A673 (cell line): ENCODE measurements at regions of chr5 and their contacts with region 1.

Region 1: GRCh38 chr5:147782110-147783028 is at the start of gene JAKMIP2:
- DNase-seq: peak; percentile 99
- H3K4me3 ChIP-seq: peak within 1 kb of the TSS; percentile 74
- H3K27ac ChIP-seq: peak within 1 kb of the TSS; percentile 86
- H3K4me1 ChIP-seq: peaks cover 31% of the 10 kb centered on the region
- H3K27me3 ChIP-seq: no peaks in the 10 kb centered on the region
- CTCF ChIP-seq: 0 out of 2 replicates have a peak, but pooled peaks have one; percentile 29
- total RNA-seq, gene JAKMIP2: 67.4 and 85.5 TPM in 2 replicates

Region 2: DNA sequence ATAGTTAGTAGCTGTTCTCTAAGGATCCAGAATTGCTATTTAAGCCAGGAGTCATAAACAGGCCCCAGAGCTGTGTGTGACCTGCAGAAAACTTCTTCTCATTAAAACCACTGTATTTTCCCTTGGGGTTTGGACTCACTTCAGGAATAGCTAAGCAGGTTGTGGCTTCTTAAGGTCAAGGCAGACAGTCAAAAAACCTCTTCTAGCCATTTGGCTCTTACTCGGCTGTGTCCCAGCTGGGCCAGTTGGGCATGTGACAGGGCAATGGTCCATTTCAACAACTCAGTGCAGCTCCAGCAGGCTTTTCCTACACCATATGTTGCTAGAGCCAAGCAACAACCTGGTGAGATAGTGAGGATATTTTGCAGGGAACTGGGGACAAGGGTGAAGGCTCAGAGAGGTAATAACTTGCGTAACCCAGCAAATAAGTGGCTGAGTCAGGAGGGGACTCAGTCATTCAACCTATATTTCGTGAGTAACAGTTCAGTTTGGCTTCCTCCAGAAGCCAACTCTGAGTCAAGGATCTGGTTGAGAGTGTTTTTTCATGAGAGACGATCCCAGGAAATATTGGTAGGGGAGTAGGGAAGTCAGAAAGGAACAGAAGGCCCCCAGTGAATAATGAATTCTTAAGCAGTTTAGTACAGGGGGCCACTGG is 788.4 kb before region 1 on chr5:
- CTCF ChIA-PET with region 1: no interaction called
- POLR2A ChIA-PET with region 1: no interaction called
- intact Hi-C with region 1: no loop called
- DNase-seq: no peak
- H3K4me3 ChIP-seq: no peak overlapping the region
- H3K27ac ChIP-seq: no peak overlapping the region
- H3K4me1 ChIP-seq: no peaks in the 10 kb centered on the region
- H3K27me3 ChIP-seq: peaks cover 8% of the 10 kb centered on the region
- CTCF ChIP-seq: no peak

Region 3: DNA sequence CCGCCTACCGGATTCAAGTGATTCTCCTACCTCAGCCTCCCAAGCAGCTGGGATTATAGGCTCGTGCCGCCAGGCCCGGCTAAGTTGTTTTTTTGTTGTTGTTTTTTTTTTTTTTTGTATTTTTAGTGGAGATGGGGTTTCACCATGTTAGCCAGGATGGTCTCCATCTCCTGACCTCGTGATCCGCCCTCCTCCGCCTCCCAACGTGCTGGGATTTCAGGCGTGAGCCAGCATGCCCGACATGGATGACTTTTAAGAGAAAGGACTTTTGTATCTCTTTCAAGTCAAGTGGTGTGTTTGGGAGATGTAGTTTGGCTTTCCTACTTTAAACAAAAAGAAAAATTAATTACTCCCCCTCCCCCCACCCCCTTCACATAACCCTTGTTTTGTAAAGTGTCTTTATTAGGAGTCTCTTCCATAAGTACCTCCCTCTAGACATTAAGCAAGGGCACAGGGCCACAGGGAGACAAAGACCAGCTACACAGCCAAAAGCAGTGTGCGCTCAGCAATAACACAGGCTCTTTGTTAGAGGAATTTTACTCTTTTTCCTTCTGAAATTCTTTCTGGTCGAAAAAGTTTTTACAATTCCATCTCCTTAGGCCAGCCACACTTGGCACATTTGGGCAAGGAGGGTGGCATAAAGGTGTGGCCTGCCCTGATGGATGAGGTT is 31.1 kb before region 1 on chr5:
- CTCF ChIA-PET with region 1: no interaction called
- POLR2A ChIA-PET with region 1: interaction called, 3 read pairs
- intact Hi-C with region 1: loop called (anchors 2 kb)
- DNase-seq: no peak
- H3K4me3 ChIP-seq: no peak overlapping the region
- H3K27ac ChIP-seq: peak overlapping the region; percentile 91
- H3K4me1 ChIP-seq: peaks cover 91% of the 10 kb centered on the region
- H3K27me3 ChIP-seq: no peaks in the 10 kb centered on the region
- CTCF ChIP-seq: no peak

Region 4: GRCh38 chr5:147803926-147804325 is 21.6 kb after region 1 on chr5:
- CTCF ChIA-PET with region 1: no interaction called
- POLR2A ChIA-PET with region 1: interaction called, 4 read pairs
- intact Hi-C with region 1: loop called (anchors 2 kb)
- DNase-seq: no peak
- H3K4me3 ChIP-seq: no peak overlapping the region
- H3K27ac ChIP-seq: peak overlapping the region; percentile 59
- H3K4me1 ChIP-seq: peaks cover 28% of the 10 kb centered on the region
- H3K27me3 ChIP-seq: no peaks in the 10 kb centered on the region
- CTCF ChIP-seq: no peak

Region 5: GRCh38 chr5:147963948-147964693 is 181.8 kb after region 1 on chr5:
- CTCF ChIA-PET with region 1: no interaction called
- POLR2A ChIA-PET with region 1: no interaction called
- intact Hi-C with region 1: no loop called
- DNase-seq: no peak
- H3K4me3 ChIP-seq: no peak overlapping the region
- H3K27ac ChIP-seq: no peak overlapping the region
- H3K4me1 ChIP-seq: no peaks in the 10 kb centered on the region
- H3K27me3 ChIP-seq: peaks cover 13% of the 10 kb centered on the region
- CTCF ChIP-seq: no peak

Region 6: DNA sequence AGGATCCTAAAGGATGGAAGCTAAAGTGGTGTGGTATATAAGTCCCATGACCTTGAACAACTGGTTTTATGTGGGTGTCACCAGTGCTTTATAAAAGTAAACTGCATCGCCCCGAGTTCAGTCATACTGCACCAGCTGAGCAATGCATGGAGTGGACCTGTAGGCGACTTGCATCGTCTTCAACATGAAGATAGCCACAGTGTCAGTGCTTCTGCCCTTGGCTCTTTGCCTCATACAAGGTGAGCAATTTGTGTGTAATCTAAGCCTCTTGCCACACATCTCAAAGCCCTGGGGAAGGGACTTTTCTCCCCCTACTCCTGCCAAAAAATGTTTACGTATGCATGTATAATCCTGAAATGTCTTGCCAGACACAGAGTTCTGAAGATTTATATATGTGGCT is 281.5 kb after region 1 on chr5 and contains the start of gene SPINK5:
- CTCF ChIA-PET with region 1: no interaction called
- POLR2A ChIA-PET with region 1: no interaction called
- intact Hi-C with region 1: no loop called
- DNase-seq: no peak
- H3K4me3 ChIP-seq: no peak within 1 kb of the TSS
- H3K27ac ChIP-seq: no peak within 1 kb of the TSS
- H3K4me1 ChIP-seq: no peaks in the 10 kb centered on the region
- H3K27me3 ChIP-seq: peaks cover 45% of the 10 kb centered on the region
- CTCF ChIP-seq: no peak
- total RNA-seq, gene SPINK5: not detected in 2 replicates

Region 7: DNA sequence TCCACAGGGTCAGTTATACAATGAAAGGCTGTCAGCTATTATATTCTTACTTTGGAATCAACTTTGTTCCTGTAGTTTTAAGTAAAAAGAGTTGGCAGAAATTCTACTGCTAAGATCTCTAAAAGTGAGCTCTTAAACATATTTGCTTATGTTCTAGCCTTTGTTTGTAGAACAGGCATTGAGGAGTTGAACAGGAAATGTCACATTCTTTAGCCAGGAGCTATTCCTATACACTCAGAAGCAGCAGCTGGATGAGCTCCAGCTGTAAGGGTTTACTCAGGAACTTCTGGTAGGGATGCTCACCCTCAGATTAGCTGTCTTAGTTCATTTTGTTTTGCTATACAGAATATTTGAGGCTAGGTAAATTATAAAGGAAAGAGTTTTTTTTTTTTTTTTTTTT is 363.5 kb after region 1 on chr5:
- CTCF ChIA-PET with region 1: no interaction called
- POLR2A ChIA-PET with region 1: no interaction called
- intact Hi-C with region 1: no loop called
- DNase-seq: peak; percentile 19
- H3K4me3 ChIP-seq: no peak overlapping the region
- H3K27ac ChIP-seq: no peak overlapping the region
- H3K4me1 ChIP-seq: no peaks in the 10 kb centered on the region
- H3K27me3 ChIP-seq: peaks cover 30% of the 10 kb centered on the region
- CTCF ChIP-seq: no peak